ENCODE measurements at regions of chr9 and their contacts with region 1.

Region 1: DNA sequence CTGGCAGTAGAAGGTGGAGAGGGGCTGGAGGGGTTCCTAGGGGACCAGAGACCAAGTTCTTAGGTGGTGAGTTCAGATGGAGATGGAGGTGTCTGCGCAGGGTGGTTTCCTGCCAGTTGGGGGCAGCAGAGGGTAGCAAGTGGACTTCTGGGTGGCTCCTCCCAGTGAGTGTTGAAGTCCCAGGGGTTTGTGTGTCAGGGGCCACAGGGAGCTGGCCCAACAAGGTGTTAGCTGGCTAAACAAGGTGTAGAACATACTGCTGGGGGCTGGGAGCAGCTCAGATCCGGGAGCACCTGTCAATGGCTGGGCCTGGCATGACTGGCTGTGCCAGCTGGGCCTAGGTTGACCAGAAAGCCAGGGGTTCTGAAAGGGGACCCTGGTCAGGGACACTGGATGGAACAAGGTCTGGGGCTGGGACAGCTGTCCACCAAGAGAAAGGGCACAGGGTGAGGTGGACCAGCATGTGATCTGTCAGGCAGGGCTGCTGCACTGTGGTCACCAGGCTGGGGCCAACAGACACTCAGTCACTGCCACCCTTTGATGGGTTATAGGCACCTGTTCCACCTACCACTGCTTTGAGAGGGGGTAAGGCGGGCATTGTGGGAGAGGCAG is 35.6 kb downstream of the DAB2IP start:
- DNase-seq: peak; percentile 80 to 85
- H3K4me3 ChIP-seq: no peak overlapping the region
- H3K4me3 Mint-ChIP-seq: no peak overlapping the region
- H3K27ac Mint-ChIP-seq: peak overlapping the region; percentile 35
- H3K4me1 ChIP-seq: peaks cover 8% of the 10 kb centered on the region
- H3K4me1 Mint-ChIP-seq: peaks cover 18% of the 10 kb centered on the region
- H3K27me3 ChIP-seq: no peaks in the 10 kb centered on the region
- H3K27me3 Mint-ChIP-seq: no peaks in the 10 kb centered on the region
- CTCF ChIP-seq: peak; percentile 90

Region 2: DNA sequence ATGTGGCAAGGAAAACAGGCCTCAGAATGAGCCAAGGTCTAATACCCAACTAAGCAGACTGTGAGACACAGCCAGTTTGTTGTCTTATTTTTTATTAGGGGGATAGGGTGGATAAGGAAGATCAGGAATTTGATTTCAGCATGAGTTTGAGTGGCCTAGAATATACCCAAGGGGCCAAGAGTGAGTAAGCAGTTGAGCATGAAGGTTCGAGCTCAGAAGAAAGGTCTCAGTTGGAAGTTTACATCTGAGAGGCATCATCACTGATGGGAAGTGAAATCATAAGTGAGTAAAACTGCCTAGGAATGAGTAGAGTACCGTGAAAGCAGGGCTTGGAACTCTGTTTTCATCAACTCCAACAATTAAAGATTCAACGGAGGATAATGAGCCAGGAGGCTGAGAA is 856.9 kb before region 1 on chr9:
- CTCF ChIA-PET with region 1: no interaction called
- POLR2A ChIA-PET with region 1: no interaction called
- intact Hi-C with region 1: no loop called
- DNase-seq: no peak
- H3K4me3 ChIP-seq: no peak overlapping the region
- H3K4me3 Mint-ChIP-seq: no peak overlapping the region
- H3K27ac Mint-ChIP-seq: no peak overlapping the region
- H3K4me1 ChIP-seq: no peaks in the 10 kb centered on the region
- H3K4me1 Mint-ChIP-seq: no peaks in the 10 kb centered on the region
- H3K27me3 ChIP-seq: no peaks in the 10 kb centered on the region
- H3K27me3 Mint-ChIP-seq: no peaks in the 10 kb centered on the region
- CTCF ChIP-seq: no peak

Region 3: DNA sequence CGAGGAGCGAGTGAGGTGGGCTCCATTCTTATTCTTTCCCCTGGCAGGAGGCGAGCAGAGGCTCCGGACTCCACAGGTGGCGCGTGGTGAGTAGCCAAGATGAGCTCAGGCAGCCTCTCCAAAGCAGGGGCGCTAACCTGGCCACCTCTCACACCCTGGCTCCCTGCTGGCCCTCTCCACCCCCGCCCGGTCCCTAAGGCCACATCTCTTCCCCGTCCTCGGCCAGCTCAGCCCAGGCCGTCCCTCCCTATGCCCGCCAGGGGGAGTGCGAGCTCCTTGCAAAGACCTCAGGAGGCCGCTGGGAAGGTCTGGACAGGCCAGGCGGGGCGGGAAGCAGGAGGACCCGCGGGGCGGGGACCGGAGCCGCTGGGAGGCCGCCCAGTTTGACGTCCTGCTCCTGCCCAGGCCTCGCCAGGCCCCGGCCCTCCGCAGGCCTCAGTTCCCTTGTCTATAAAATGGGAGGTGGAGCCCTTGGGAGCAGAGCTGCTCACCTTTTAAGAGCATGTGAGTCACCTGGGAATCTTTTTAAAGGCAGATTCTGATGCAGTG is 141.1 kb before region 1 on chr9:
- CTCF ChIA-PET with region 1: interaction called, 10 read pairs
- POLR2A ChIA-PET with region 1: no interaction called
- intact Hi-C with region 1: no loop called
- DNase-seq: peak; percentile 96 to 97
- H3K4me3 ChIP-seq: peak overlapping the region; percentile 26
- H3K4me3 Mint-ChIP-seq: no peak overlapping the region
- H3K27ac Mint-ChIP-seq: no peak overlapping the region
- H3K4me1 ChIP-seq: no peaks in the 10 kb centered on the region
- H3K4me1 Mint-ChIP-seq: no peaks in the 10 kb centered on the region
- H3K27me3 ChIP-seq: no peaks in the 10 kb centered on the region
- H3K27me3 Mint-ChIP-seq: no peaks in the 10 kb centered on the region
- CTCF ChIP-seq: peak; percentile 92 to 97

Region 4: GRCh38 chr9:121640076-121640475 is 47.0 kb before region 1 on chr9:
- CTCF ChIA-PET with region 1: interaction called, 19 read pairs
- POLR2A ChIA-PET with region 1: no interaction called
- intact Hi-C with region 1: loop called (anchors 2 kb)
- DNase-seq: peak; percentile 58 to 76
- H3K4me3 ChIP-seq: no peak overlapping the region
- H3K4me3 Mint-ChIP-seq: no peak overlapping the region
- H3K27ac Mint-ChIP-seq: no peak overlapping the region
- H3K4me1 ChIP-seq: 0 out of 2 replicates have a peak, but pooled peaks cover 1% of the 10 kb centered on the region
- H3K4me1 Mint-ChIP-seq: peaks cover 11% of the 10 kb centered on the region
- H3K27me3 ChIP-seq: no peaks in the 10 kb centered on the region
- H3K27me3 Mint-ChIP-seq: no peaks in the 10 kb centered on the region
- CTCF ChIP-seq: peak; percentile 64 to 65

Region 5: GRCh38 chr9:121656931-121657470 is 30.0 kb before region 1 on chr9:
- CTCF ChIA-PET with region 1: interaction called, 4 read pairs
- POLR2A ChIA-PET with region 1: interaction called, 10 read pairs
- intact Hi-C with region 1: loop called (anchors 5 kb)
- DNase-seq: no peak
- H3K4me3 ChIP-seq: no peak overlapping the region
- H3K4me3 Mint-ChIP-seq: no peak overlapping the region
- H3K27ac Mint-ChIP-seq: no peak overlapping the region
- H3K4me1 ChIP-seq: no peaks in the 10 kb centered on the region
- H3K4me1 Mint-ChIP-seq: no peaks in the 10 kb centered on the region
- H3K27me3 ChIP-seq: no peaks in the 10 kb centered on the region
- H3K27me3 Mint-ChIP-seq: no peaks in the 10 kb centered on the region
- CTCF ChIP-seq: no peak

Region 6: GRCh38 chr9:121744002-121744686 is 57.1 kb after region 1 on chr9:
- CTCF ChIA-PET with region 1: interaction called, 6 read pairs
- POLR2A ChIA-PET with region 1: no interaction called
- intact Hi-C with region 1: loop called (anchors 2 kb)
- DNase-seq: peak; percentile 71 to 76
- H3K4me3 ChIP-seq: peak overlapping the region; percentile 32
- H3K4me3 Mint-ChIP-seq: no peak overlapping the region
- H3K27ac Mint-ChIP-seq: no peak overlapping the region
- H3K4me1 ChIP-seq: peaks cover 26% of the 10 kb centered on the region
- H3K4me1 Mint-ChIP-seq: peaks cover 5% of the 10 kb centered on the region
- H3K27me3 ChIP-seq: no peaks in the 10 kb centered on the region
- H3K27me3 Mint-ChIP-seq: no peaks in the 10 kb centered on the region
- CTCF ChIP-seq: peak; percentile 57 to 81

Region 7: DNA sequence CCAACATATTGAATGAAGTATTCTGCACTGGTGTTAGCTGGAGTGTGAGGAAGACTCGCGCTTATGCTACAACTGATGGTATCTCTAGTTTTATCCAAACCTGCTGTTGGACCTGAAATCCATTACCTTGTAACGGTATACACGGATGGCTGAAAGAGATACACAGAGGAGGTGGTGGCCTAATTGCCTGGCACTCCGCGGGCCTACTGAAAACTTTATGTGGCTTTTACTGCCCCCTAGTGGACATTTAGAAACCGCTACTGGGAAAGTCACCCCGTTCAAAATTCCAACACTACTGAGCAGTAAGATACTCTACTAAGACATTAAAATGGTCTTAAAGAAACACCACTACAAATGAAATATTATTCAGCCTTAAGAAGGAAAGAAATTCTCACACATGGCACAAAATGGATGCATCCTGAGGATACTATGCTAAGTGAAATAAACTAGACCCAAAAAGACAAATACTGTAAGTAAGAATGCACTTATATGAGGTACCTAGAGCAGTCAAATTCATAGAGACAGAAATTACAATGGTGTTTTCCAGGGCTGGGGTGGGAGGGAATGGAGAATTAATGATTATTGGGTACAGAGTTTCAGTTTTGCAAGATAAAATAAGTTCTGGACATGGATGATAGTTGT is 305.7 kb after region 1 on chr9:
- CTCF ChIA-PET with region 1: interaction called, 3 read pairs
- POLR2A ChIA-PET with region 1: no interaction called
- intact Hi-C with region 1: loop called (anchors 1 kb)
- DNase-seq: peak; percentile 43 to 55
- H3K4me3 ChIP-seq: no peak overlapping the region
- H3K4me3 Mint-ChIP-seq: no peak overlapping the region
- H3K27ac Mint-ChIP-seq: no peak overlapping the region
- H3K4me1 ChIP-seq: no peaks in the 10 kb centered on the region
- H3K4me1 Mint-ChIP-seq: no peaks in the 10 kb centered on the region
- H3K27me3 ChIP-seq: no peaks in the 10 kb centered on the region
- H3K27me3 Mint-ChIP-seq: no peaks in the 10 kb centered on the region
- CTCF ChIP-seq: peak; percentile 75

Measured in Caco-2 (cell line).